Activated CD4-positive, alpha-beta memory T cell treated with anti-CD3 and anti-CD28 coated beads for 36 hours (primary cell): ENCODE measurements at regions of chr1 and their contacts with region 1.

Region 1: GRCh38 chr1:150979092-150980056 is 2.7 kb upstream of the ANXA9 start:
- DNase-seq: peak; percentile 92
- H3K4me3 Mint-ChIP-seq: peak overlapping the region; percentile 7
- H3K27ac Mint-ChIP-seq: no peak overlapping the region
- H3K4me1 Mint-ChIP-seq: peaks cover 33% of the 10 kb centered on the region
- H3K27me3 Mint-ChIP-seq: no peaks in the 10 kb centered on the region

Region 2: GRCh38 chr1:150464422-150464826 is 515.0 kb before region 1 on chr1:
- CTCF ChIA-PET with region 1: no interaction called
- POLR2A ChIA-PET with region 1: no interaction called
- intact Hi-C with region 1: loop called (anchors 5 kb)
- DNase-seq: peak; percentile 76
- H3K4me3 Mint-ChIP-seq: no peak overlapping the region
- H3K27ac Mint-ChIP-seq: peak overlapping the region; percentile 11
- H3K4me1 Mint-ChIP-seq: peaks cover 4% of the 10 kb centered on the region
- H3K27me3 Mint-ChIP-seq: no peaks in the 10 kb centered on the region

Region 3: GRCh38 chr1:150613061-150613920 is 366.1 kb before region 1 on chr1:
- CTCF ChIA-PET with region 1: no interaction called
- POLR2A ChIA-PET with region 1: no interaction called
- intact Hi-C with region 1: loop called (anchors 5 kb)
- DNase-seq: peak; percentile 75
- H3K4me3 Mint-ChIP-seq: peak overlapping the region; percentile 62
- H3K27ac Mint-ChIP-seq: peak overlapping the region; percentile 97
- H3K4me1 Mint-ChIP-seq: peaks cover 66% of the 10 kb centered on the region
- H3K27me3 Mint-ChIP-seq: no peaks in the 10 kb centered on the region

Region 4: GRCh38 chr1:150876119-150876454 is 103.3 kb before region 1 on chr1:
- CTCF ChIA-PET with region 1: interaction called, 3 read pairs
- POLR2A ChIA-PET with region 1: no interaction called
- intact Hi-C with region 1: loop called (anchors 2 kb)
- DNase-seq: no peak
- H3K4me3 Mint-ChIP-seq: peak overlapping the region; percentile 84
- H3K27ac Mint-ChIP-seq: peak overlapping the region; percentile 85
- H3K4me1 Mint-ChIP-seq: peaks cover 30% of the 10 kb centered on the region
- H3K27me3 Mint-ChIP-seq: no peaks in the 10 kb centered on the region

Region 5: DNA sequence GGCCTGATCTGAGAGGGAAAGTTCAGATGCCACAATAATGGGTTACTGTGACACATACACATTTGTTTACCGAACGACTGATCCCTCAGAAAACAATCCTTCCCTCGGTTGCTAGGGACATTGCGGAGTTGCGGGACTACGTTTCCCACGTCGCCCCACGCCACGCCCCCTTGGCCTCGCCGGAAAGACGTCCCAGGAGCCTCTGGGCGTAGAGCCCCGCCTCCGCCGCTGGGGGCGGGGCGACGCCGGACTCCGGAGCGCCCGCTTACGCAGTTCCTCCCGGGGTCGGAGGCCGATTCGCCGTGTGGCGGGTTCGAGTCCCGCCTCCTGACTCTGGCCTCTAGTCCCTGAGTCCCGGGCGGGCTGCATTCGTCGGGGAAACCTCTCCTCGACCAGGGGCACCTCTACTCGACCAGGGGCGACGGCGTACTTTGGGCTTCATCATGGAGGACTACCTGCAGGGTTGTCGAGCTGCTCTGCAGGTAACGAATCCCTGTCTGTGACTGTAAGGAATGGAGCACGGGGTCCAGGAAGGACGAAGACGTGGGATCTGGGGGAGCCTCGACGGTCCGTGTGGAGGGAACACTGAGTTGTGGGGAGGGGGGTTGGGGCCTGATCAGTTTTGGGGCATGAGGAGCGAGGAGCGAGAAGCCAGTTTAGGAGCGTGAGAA is 29.0 kb after region 1 on chr1 and contains the start of gene PRUNE1:
- CTCF ChIA-PET with region 1: interaction called, 222 read pairs
- POLR2A ChIA-PET with region 1: interaction called, 16 read pairs
- intact Hi-C with region 1: no loop called
- DNase-seq: peak; percentile 97
- H3K4me3 Mint-ChIP-seq: peak within 1 kb of the TSS; percentile 99
- H3K27ac Mint-ChIP-seq: peak within 1 kb of the TSS; percentile 97
- H3K4me1 Mint-ChIP-seq: peaks cover 64% of the 10 kb centered on the region
- H3K27me3 Mint-ChIP-seq: no peaks in the 10 kb centered on the region
- total RNA-seq, gene PRUNE1: 12.5 to 17.5 TPM